ENCODE measurements at regions of chr3 and their contacts with region 1.

Region 1: GRCh38 chr3:52278510-52279069 is at the start of gene WDR82:
- DNase-seq: peak; percentile 98
- H3K4me3 Mint-ChIP-seq: peak within 1 kb of the TSS; percentile 95
- H3K27ac Mint-ChIP-seq: peak within 1 kb of the TSS; percentile 98
- H3K4me1 Mint-ChIP-seq: peaks cover 57% of the 10 kb centered on the region
- H3K27me3 Mint-ChIP-seq: no peaks in the 10 kb centered on the region
- total RNA-seq, gene WDR82: 176 to 177 TPM

Region 2: DNA sequence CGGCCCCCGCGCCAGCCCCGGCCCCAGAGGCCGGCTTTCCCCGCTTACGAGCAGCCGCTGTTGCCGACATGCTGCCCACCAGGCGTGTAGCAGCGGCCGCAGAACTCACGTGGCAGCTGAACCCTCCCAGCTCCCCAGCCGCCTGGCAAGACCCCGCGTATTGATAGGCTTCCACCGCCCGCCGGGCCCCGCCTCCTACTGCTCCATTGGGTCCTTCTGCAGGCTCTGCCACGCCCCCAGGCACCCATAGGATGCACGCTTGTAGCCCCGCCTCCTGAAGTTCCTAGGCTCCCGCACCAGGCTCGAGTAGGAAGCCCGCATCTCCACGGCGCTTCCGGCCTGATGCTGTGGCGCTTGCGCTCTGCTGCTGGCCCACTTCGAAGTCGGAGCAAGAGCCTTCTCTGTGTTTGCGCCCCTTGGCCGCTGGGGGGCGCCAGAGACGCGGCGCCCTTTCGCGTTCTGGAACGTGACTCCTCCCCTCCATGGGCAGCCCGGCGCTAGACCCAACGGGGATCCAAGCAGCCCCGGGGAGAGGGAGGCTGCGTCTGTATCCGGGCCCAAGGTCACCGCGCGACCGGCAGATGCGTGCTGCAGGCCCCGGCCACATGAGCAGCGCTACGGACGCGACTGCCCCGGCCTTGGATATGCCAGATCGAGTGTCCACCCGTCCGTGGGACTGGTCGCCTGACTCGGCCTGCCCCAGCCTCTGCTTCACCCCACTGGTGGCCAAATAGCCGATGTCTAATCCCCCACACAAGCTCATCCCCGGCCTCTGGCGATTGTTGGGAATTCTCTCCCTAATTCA is 336.6 kb before region 1 on chr3 and contains the starts of genes PARP3 and RRP9:
- CTCF ChIA-PET with region 1: no interaction called
- intact Hi-C with region 1: loop called (anchors 5 kb)
- DNase-seq: peak; percentile 100
- H3K4me3 Mint-ChIP-seq: peak within 1 kb of the TSS; percentile 88
- H3K27ac Mint-ChIP-seq: peak within 1 kb of the TSS; percentile 82
- H3K4me1 Mint-ChIP-seq: peaks cover 33% of the 10 kb centered on the region
- H3K27me3 Mint-ChIP-seq: no peaks in the 10 kb centered on the region
- total RNA-seq, gene PARP3: 10.0 to 11.1 TPM
- total RNA-seq, gene RRP9: 24.6 to 25.0 TPM

Region 3: GRCh38 chr3:52220380-52221026 is 58.1 kb before region 1 on chr3:
- CTCF ChIA-PET with region 1: interaction called, 11 read pairs
- intact Hi-C with region 1: no loop called
- DNase-seq: peak; percentile 97
- H3K4me3 Mint-ChIP-seq: no peak overlapping the region
- H3K27ac Mint-ChIP-seq: no peak overlapping the region
- H3K4me1 Mint-ChIP-seq: peaks cover 82% of the 10 kb centered on the region
- H3K27me3 Mint-ChIP-seq: no peaks in the 10 kb centered on the region

Region 4: DNA sequence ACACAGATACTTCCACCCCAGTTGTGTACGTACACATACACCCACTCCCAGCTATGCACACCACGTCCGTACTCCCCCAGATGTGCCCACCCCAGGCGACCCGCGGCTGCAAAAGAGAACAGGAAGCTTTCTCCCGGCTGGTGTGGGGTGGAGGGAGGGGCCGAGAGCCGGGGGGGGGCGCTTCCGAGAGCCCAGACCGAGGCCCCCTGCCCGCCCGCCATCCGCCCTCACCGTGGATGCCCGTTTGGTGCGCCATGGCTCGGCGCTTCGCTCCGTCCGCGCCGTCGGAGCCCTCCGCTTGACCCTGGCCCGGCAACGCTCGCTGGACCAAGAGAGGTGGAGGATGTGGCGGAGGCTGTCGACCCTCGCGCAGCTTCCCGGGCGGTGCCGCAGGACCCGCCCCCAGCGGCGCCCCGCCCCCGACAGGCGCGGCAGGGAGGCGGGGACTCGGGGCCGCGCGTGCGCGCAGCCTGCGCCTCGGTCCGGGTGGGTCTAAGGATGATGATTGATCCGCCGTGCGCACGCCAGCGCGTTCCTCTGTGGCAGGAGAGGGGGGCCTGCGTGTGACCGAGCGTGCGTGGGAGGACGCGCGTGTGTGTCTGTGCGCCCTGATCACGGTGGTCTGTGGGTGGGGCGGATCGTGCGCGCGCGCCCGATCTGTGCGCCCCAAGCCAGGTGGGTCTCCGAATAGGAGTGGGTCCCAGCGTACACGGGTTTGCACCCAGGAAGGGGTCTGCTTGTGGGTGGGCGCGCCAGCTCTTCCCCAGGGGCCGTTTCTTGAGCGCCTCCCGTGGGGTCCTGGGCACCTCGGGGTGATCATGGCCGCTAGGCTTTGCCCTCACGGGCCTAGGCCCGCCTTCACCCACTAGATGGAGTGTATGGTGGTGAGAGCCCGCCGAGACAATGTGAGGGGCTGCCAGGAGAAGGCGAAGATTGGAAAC is 39.6 kb before region 1 on chr3 and contains the start of gene TWF2:
- CTCF ChIA-PET with region 1: interaction called, 69 read pairs
- intact Hi-C with region 1: loop called (anchors 1 kb)
- DNase-seq: peak; percentile 83
- H3K4me3 Mint-ChIP-seq: peak within 1 kb of the TSS; percentile 92
- H3K27ac Mint-ChIP-seq: peak within 1 kb of the TSS; percentile 98
- H3K4me1 Mint-ChIP-seq: peaks cover 75% of the 10 kb centered on the region
- H3K27me3 Mint-ChIP-seq: no peaks in the 10 kb centered on the region
- total RNA-seq, gene TWF2: 89.1 to 91.3 TPM

Region 5: DNA sequence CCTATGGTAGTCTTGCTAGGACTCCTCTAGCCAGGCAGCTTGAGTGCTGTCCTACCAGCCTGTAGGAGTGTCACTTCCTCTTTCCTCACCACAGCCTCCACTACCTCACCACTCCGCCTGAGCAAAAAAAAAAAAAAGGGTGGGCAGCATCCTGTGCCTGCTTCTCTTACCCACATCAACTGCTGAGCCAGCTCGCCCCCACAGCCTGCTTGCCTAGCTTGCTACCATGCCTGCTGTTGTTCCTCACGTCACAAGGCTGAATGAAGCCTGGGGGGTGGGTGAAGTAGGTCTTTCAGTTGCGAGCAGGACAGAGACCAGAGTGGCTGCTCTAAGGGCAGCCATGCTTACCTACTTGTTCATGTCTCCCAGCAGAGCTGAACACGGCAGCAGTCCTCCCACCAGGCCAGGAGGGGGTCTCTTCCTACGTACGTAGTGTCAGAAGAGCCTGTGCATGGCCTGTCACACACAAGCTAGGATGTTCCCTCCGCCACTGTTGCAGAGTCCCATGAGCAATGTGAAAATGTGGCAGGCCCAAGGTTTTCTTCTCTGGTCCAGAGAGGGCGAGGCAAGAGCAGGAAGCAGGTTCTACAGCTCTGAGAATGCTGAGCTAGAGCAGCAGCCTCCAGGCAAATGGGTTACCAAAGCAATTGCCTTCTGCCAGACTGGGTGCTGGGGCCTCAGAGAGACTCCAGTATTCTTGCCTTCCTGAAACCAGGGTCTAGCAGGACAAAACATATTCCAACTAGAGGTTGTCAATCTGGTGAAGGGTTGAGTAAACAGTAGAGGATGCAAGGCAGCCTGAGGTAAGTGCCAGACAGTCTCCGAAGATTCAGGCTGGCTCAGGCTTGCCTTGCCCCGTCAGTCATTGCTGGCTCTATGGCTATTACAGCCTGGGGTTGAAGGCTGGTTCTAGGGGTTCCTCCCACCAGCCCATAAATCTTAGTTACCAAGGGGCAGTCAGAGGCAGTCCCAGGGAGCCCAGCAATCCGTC is 25.0 kb before region 1 on chr3:
- CTCF ChIA-PET with region 1: interaction called, 17 read pairs
- intact Hi-C with region 1: loop called (anchors 1 kb)
- DNase-seq: peak; percentile 89
- H3K4me3 Mint-ChIP-seq: peak overlapping the region; percentile 65
- H3K27ac Mint-ChIP-seq: peak overlapping the region; percentile 99
- H3K4me1 Mint-ChIP-seq: peaks cover 89% of the 10 kb centered on the region
- H3K27me3 Mint-ChIP-seq: no peaks in the 10 kb centered on the region

Region 6: GRCh38 chr3:52291508-52292181 is 13.1 kb after region 1 on chr3:
- CTCF ChIA-PET with region 1: interaction called, 6 read pairs
- intact Hi-C with region 1: loop called (anchors 1 kb)
- DNase-seq: peak; percentile 51
- H3K4me3 Mint-ChIP-seq: no peak overlapping the region
- H3K27ac Mint-ChIP-seq: no peak overlapping the region
- H3K4me1 Mint-ChIP-seq: peaks cover 24% of the 10 kb centered on the region
- H3K27me3 Mint-ChIP-seq: no peaks in the 10 kb centered on the region

Region 7: DNA sequence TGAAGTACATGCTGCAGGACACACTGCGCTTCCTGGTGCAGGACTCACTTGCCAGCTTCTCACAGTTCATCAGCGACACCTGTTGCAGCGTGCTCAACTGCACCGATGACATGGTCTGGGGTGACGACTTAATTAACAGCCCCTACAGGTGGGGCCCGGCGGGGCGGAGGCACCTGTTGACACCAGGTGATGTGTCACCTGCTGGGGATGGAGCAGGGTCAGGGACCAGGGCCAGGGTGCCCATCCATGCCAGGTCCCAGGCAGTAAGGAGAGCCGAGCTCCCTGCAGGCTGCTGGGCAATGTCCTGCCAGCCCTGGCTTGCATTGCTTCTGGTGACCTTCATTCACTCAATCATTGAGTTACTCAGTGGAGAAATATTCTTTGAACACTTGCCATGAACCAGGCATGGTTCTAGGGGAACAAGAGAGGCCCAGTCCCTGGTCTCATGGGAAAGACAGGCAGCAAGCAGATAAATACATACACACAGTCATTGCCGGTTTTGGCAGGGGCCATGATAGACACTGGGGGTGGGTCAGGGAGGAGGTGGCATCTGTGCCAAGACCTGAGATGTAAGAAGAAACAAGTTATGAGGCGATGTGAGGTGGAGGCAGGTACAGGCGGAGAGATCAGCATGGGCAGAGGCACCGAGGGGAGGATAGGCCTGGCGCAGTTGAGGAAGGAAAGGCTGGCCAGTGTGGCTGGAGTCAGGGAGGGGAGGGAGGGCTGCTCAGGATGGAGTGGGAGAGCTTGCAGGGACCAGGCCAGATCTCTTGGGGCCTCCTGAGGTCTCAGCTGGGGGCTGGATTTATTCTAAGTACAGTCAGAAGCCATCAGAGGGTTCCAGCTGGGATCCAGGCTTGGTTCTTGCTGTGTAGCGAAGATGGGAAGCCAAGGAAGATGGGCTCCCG is 68.3 kb after region 1 on chr3:
- CTCF ChIA-PET with region 1: no interaction called
- intact Hi-C with region 1: no loop called
- DNase-seq: no peak
- H3K4me3 Mint-ChIP-seq: no peak overlapping the region
- H3K27ac Mint-ChIP-seq: no peak overlapping the region
- H3K4me1 Mint-ChIP-seq: no peaks in the 10 kb centered on the region
- H3K27me3 Mint-ChIP-seq: no peaks in the 10 kb centered on the region

Region 8: GRCh38 chr3:52536369-52537164 is 258.0 kb after region 1 on chr3 and contains the start of gene UQCC5:
- CTCF ChIA-PET with region 1: no interaction called
- intact Hi-C with region 1: loop called (anchors 5 kb)
- DNase-seq: peak; percentile 98
- H3K4me3 Mint-ChIP-seq: peak within 1 kb of the TSS; percentile 91
- H3K27ac Mint-ChIP-seq: peak within 1 kb of the TSS; percentile 87
- H3K4me1 Mint-ChIP-seq: peaks cover 49% of the 10 kb centered on the region
- H3K27me3 Mint-ChIP-seq: no peaks in the 10 kb centered on the region
- total RNA-seq, gene UQCC5: 12.3 to 13.1 TPM

Region 9: DNA sequence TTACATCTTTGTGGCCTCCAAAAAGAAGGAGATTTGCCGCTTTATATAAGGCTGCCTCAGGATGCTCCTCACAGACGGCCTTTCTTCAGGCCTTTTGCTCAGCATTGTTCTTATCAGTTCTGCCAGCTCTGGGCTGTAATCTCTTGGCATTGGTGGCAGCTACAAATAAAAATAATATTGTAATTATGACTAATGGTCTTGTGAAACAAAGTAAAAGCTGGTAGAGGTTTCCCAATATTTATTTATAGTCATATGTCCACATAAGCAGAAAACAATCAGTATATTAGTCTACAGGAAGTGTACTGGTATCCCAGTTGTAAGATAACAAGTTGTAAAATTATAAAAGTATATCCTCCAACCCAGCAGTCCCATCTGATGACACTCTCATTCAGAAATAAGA is 484.9 kb after region 1 on chr3:
- CTCF ChIA-PET with region 1: no interaction called
- intact Hi-C with region 1: no loop called
- DNase-seq: no peak
- H3K4me3 Mint-ChIP-seq: no peak overlapping the region
- H3K27ac Mint-ChIP-seq: no peak overlapping the region
- H3K4me1 Mint-ChIP-seq: no peaks in the 10 kb centered on the region
- H3K27me3 Mint-ChIP-seq: no peaks in the 10 kb centered on the region